Activated CD8-positive, alpha-beta memory T cell treated with anti-CD3 and anti-CD28 coated beads, Interleukin-2, amount 10 ng/mL, durations not matched to agents 7 days and 5 days (primary cell): ENCODE measurements at regions of chr3 and their contacts with region 1.

Region 1: GRCh38 chr3:125141596-125142419 is 70.7 kb downstream of the SLC12A8 start:
- DNase-seq: peak; percentile 90
- ATAC-seq: peak; percentile 90
- H3K4me3 Mint-ChIP-seq: peak overlapping the region; percentile 72
- H3K27ac Mint-ChIP-seq: peak overlapping the region; percentile 95
- H3K4me1 Mint-ChIP-seq: peaks cover 39% of the 10 kb centered on the region
- H3K27me3 Mint-ChIP-seq: peaks cover 60% of the 10 kb centered on the region

Region 2: GRCh38 chr3:125119752-125120378 is 21.9 kb before region 1 on chr3:
- CTCF ChIA-PET with region 1: interaction called, 11 read pairs
- DNase-seq: no peak
- ATAC-seq: peak; percentile 64
- H3K4me3 Mint-ChIP-seq: no peak overlapping the region
- H3K27ac Mint-ChIP-seq: peak overlapping the region; percentile 81
- H3K4me1 Mint-ChIP-seq: peaks cover 51% of the 10 kb centered on the region
- H3K27me3 Mint-ChIP-seq: peaks cover 12% of the 10 kb centered on the region

Region 3: DNA sequence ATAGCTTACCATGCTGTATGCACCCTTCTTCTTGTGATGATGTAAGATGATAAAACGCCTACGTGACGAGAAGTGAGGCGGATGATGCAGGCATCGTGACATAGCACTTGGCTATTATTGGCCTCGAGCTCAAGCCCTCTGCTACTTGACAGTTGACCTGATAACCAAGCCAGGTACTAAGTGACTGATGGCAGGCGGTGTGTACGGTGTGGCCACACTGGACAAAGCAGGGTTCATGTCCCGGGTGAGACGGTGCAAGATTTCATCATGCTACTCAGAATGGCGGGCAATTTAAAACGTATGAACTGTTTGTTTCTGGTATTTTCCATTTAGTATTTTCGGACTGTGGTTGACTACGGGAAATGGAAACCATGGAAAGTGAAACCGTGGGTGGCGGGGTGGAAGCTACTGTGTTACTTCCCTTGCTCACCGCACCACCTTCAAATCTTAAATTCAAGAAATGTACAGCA is 13.0 kb after region 1 on chr3:
- CTCF ChIA-PET with region 1: interaction called, 10 read pairs
- DNase-seq: peak; percentile 74
- ATAC-seq: no peak
- H3K4me3 Mint-ChIP-seq: peak overlapping the region; percentile 31
- H3K27ac Mint-ChIP-seq: peak overlapping the region; percentile 77
- H3K4me1 Mint-ChIP-seq: peaks cover 12% of the 10 kb centered on the region
- H3K27me3 Mint-ChIP-seq: peaks cover 44% of the 10 kb centered on the region